ENCODE measurements at regions of chr12 and their contacts with region 1.

Region 1: DNA sequence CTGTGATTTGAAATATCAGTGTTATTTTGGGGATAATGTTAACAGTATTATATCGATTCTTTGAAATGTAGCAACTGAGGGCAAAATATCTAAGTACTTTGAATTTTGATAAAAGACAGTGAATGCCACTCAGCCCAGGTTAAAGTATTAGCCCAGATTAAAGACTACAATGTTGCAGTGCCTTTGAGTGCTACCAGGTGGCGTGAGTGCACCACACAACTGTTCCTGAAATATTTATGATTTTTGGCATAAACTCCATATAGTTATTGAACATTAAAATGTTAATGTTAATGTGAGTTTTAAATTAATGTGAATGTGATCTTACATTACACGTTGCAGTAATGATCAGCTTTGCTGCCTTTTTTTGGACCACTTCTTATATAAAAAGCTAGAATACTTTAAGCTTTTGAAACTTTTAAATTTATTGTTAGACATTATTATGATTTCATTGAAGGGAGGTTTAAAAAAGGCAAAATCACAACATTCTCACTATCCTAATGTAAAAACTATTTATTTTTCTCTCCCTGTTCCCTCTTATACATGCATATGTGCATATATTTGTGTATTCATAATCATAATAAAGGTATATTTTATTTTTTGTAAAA is 22.5 kb downstream of the MRPS35 start:
- DNase-seq: peak in 26 of 42 donors; percentile 8 to 68 (median 38)

Region 2: GRCh38 chr12:27602516-27602915 is 130.6 kb before region 1 on chr12:
- intact Hi-C with region 1: no loop called
- DNase-seq: no peak

Region 3: DNA sequence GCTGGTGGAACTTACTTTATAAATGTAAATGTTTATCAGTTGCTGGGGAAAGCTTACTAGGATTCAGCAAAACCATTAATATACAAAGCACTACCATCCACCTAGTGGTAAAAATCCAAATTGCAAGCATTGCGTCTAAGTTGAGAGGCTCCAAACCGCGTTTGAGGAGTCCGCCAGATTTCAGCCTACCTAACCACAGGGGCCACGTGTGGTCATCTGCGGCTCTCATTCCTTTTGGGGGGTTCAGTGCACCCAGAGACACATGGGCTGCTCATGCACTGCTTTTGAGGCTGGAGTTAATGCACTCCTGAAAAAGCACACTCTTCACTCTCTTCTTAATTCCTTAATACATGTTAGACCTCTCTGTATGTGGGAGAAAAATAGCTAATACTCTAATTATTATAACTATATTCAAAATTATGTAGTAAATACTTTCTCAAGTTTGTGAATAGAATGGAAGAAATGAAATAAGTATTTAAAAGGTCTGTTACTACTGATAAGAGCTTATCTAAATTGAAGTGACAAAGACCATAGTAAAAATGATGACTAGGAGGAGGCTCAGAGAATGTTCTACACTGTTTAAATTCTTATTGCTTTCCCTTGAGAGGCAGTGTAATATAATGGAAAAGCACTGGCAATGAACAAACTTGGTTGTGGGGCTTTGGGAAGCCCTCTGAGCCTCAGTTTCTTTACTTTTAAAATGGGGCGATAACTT is 88.3 kb after region 1 on chr12:
- intact Hi-C with region 1: loop called (anchors 5 kb)
- DNase-seq: peak in 19 of 42 donors; percentile 6 to 78 (median 43)

Region 4: GRCh38 chr12:27859648-27860047 is 126.5 kb after region 1 on chr12:
- intact Hi-C with region 1: no loop called
- DNase-seq: no peak